Aorta (tissue), 5 donors: ENCODE measurements at regions of chr5 and their contacts with region 1.

Region 1: GRCh38 chr5:102865510-102866236 is 110.6 kb downstream of the PAM start:
- DNase-seq: peak; percentile 83 to 92
- ATAC-seq: peak; percentile 89
- H3K4me3 ChIP-seq: peak overlapping the region; percentile 66 to 79
- H3K27ac ChIP-seq: peak overlapping the region; percentile 74 to 96
- H3K4me1 ChIP-seq: peaks cover 3 to 17% of the 10 kb centered on the region in 2 donors
- H3K27me3 ChIP-seq: no peaks in the 10 kb centered on the region

Region 2: GRCh38 chr5:102754767-102755431 is 110.8 kb before region 1 on chr5 and contains the start of gene PAM:
- intact Hi-C with region 1: loop called in 1 of 2 experiments (anchors 5 kb)
- DNase-seq: peak; percentile 89 to 93
- ATAC-seq: peak; percentile 94
- H3K4me3 ChIP-seq: peak within 1 kb of the TSS; percentile 79 to 92
- H3K27ac ChIP-seq: peak within 1 kb of the TSS; percentile 81 to 93
- H3K4me1 ChIP-seq: peaks cover 0 to 3% of the 10 kb centered on the region in 2 donors
- H3K27me3 ChIP-seq: no peaks in the 10 kb centered on the region
- total RNA-seq, gene PAM: 711 to 787 TPM

Region 3: DNA sequence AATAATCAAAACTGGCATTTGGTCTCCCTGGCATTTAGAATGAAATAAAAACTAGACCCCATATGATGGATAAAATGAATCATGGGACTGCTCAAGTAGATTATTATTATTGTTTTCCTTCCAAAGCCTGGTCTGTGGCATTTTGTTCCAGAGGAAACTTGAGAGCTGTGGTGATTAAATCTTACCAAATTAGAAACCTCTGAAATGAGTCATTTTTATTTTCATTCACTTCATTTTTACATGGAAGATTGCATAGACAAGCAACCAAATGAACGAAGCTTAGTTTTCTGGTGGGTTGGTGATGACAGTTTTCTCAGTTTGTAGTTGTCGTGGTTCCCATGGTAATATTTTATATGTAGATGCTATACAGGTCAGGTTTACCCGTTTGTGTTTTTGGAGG is 87.2 kb before region 1 on chr5:
- intact Hi-C with region 1: loop called in 1 of 2 experiments (anchors 10 kb)
- DNase-seq: no peak
- ATAC-seq: peak; percentile 68
- H3K4me3 ChIP-seq: no peak overlapping the region
- H3K27ac ChIP-seq: peak overlapping the region in 1 of 2 donors; percentile 67
- H3K4me1 ChIP-seq: peaks cover 7 to 9% of the 10 kb centered on the region in 2 donors
- H3K27me3 ChIP-seq: no peaks in the 10 kb centered on the region

Region 4: DNA sequence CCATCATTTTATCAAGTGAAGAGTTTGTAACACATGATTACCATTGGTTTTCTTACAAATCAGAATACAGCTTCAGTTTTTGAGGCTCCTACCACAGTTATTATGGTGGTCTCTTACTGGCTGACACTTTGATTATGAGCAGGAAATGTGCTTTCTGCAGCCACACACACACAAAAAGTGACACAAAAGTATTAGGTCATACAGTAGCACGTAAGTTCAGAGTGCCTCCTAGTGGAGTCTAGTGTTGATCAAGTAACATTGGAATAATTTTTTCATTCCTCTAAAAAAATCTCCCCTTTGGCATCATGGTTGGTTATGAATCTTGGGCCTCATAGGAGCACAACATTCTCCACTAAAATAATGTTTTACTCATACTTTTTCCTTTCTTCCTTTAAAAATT is 73.0 kb before region 1 on chr5:
- intact Hi-C with region 1: loop called (anchors 10 kb)
- DNase-seq: no peak
- ATAC-seq: no peak
- H3K4me3 ChIP-seq: no peak overlapping the region
- H3K27ac ChIP-seq: no peak overlapping the region
- H3K4me1 ChIP-seq: peaks cover 0 to 3% of the 10 kb centered on the region in 2 donors
- H3K27me3 ChIP-seq: no peaks in the 10 kb centered on the region

Region 5: GRCh38 chr5:102911973-102912372 is 46.3 kb after region 1 on chr5:
- intact Hi-C with region 1: loop called in 1 of 2 experiments (anchors 5 kb)
- DNase-seq: no peak
- ATAC-seq: no peak
- H3K4me3 ChIP-seq: no peak overlapping the region
- H3K27ac ChIP-seq: peak overlapping the region in 1 of 2 donors; percentile 57
- H3K4me1 ChIP-seq: peaks cover 0 to 6% of the 10 kb centered on the region in 2 donors
- H3K27me3 ChIP-seq: no peaks in the 10 kb centered on the region

Region 6: GRCh38 chr5:102959055-102959454 is 93.4 kb after region 1 on chr5:
- intact Hi-C with region 1: loop called in 1 of 2 experiments (anchors 5 kb)
- DNase-seq: no peak
- ATAC-seq: peak; percentile 88
- H3K4me3 ChIP-seq: no peak overlapping the region
- H3K27ac ChIP-seq: no peak overlapping the region
- H3K4me1 ChIP-seq: peaks cover 0 to 6% of the 10 kb centered on the region in 2 donors
- H3K27me3 ChIP-seq: no peaks in the 10 kb centered on the region

Region 7: DNA sequence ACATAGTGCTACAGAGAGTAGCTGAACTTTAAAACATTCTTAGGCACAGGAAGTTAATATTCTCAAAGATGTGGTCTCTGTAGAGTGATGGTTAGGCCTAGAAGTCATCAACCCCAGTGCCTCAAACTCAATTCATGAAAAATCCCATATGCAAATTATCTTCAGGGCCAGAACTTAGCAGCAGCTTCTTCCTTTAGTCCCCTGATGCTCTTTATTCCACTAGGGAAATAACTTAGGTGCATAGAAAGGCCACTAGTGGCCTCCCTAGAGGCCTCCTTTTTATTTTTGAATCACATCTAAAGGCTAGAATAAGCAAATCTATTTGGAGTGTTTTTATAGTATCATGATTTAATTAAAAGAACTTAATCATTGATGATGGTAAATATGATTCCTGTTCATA is 165.9 kb after region 1 on chr5:
- intact Hi-C with region 1: loop called in 1 of 2 experiments (anchors 10 kb)
- DNase-seq: no peak
- ATAC-seq: no peak
- H3K4me3 ChIP-seq: no peak overlapping the region
- H3K27ac ChIP-seq: no peak overlapping the region
- H3K4me1 ChIP-seq: no peaks in the 10 kb centered on the region
- H3K27me3 ChIP-seq: no peaks in the 10 kb centered on the region